Activated T-helper 1 cell treated with anti-CD3 and anti-CD28 coated beads, Interleukin-12 subunit alpha, Interleukin-12 subunit beta, Interleukin-2, Interleukin-4 antibody, amounts not matched to agents 30 ng/mL and 10 ng/mL and 1 ng/mL, durations not matched to agents 14 hours and 24 hours and 36 hours (primary cell): ENCODE measurements at regions of chr19 and their contacts with region 1.

Region 1: GRCh38 chr19:33778089-33778791 is 18.4 kb upstream of the KCTD15 start:
- DNase-seq: peak; percentile 76
- H3K4me3 Mint-ChIP-seq: no peak overlapping the region
- H3K27ac Mint-ChIP-seq: no peak overlapping the region
- H3K4me1 Mint-ChIP-seq: peaks cover 5% of the 10 kb centered on the region
- H3K27me3 Mint-ChIP-seq: peaks cover 2% of the 10 kb centered on the region

Region 2: DNA sequence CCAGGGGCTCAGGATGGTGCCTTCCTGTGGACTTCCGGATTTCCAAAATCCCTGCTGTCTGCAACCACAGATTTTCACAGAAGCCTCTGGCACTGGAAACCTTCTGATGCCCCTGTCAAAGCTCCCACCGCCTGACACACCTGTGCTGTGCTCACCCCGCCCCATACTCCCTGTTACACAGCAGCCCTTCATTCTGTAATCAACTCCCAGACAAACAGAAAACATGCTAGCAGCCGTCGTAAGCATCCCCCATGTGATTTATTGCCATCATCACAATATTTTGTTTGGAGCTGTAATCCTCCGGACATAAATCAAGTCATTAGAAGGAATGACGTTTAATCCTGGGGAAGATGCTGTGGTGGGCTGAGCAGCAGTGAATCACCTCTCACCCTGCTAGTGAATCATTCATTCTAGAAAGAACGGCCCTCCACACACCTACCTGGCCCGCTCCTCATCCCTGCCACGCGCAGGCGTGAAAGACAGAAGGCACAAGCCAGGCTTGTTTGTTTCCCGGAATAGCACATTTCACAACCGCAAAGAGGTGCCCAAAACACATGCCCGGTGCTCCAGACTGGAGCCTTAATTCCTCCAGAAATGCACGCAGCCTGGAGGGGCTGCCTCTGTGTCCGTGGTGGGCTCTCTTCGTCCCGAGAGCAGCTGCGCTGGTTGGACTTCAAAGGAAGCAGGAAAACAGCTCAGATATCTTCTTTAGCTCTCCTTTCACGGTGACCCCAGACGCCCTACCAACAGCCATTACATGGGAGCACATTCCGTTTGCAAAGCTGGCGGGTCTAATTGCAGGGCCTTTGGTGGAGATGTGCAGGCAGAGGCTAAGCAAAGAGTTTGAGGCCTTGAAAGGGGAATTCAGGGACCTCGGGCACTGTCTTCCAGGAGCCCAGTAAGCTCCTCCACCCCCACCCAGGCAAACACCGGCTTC is 22.9 kb before region 1 on chr19:
- intact Hi-C with region 1: no loop called
- DNase-seq: no peak
- H3K4me3 Mint-ChIP-seq: no peak overlapping the region
- H3K27ac Mint-ChIP-seq: no peak overlapping the region
- H3K4me1 Mint-ChIP-seq: no peaks in the 10 kb centered on the region
- H3K27me3 Mint-ChIP-seq: no peaks in the 10 kb centered on the region

Region 3: GRCh38 chr19:33795370-33796163 is 17.3 kb after region 1 on chr19:
- intact Hi-C with region 1: loop called (anchors 1 kb)
- DNase-seq: peak; percentile 27
- H3K4me3 Mint-ChIP-seq: peak overlapping the region; percentile 73
- H3K27ac Mint-ChIP-seq: peak overlapping the region; percentile 52
- H3K4me1 Mint-ChIP-seq: no peaks in the 10 kb centered on the region
- H3K27me3 Mint-ChIP-seq: peaks cover 28% of the 10 kb centered on the region

Region 4: GRCh38 chr19:33998739-33999345 is 220.6 kb after region 1 on chr19:
- intact Hi-C with region 1: loop called (anchors 1 kb)
- DNase-seq: no peak
- H3K4me3 Mint-ChIP-seq: no peak overlapping the region
- H3K27ac Mint-ChIP-seq: no peak overlapping the region
- H3K4me1 Mint-ChIP-seq: no peaks in the 10 kb centered on the region
- H3K27me3 Mint-ChIP-seq: peaks cover 6% of the 10 kb centered on the region

Region 5: GRCh38 chr19:34145741-34146202 is 367.5 kb after region 1 on chr19:
- intact Hi-C with region 1: loop called (anchors 1 kb)
- DNase-seq: peak; percentile 31
- H3K4me3 Mint-ChIP-seq: no peak overlapping the region
- H3K27ac Mint-ChIP-seq: no peak overlapping the region
- H3K4me1 Mint-ChIP-seq: no peaks in the 10 kb centered on the region
- H3K27me3 Mint-ChIP-seq: no peaks in the 10 kb centered on the region

Region 6: GRCh38 chr19:34712395-34713261 is 934.4 kb after region 1 on chr19:
- intact Hi-C with region 1: loop called (anchors 5 kb)
- DNase-seq: peak; percentile 43
- H3K4me3 Mint-ChIP-seq: no peak overlapping the region
- H3K27ac Mint-ChIP-seq: no peak overlapping the region
- H3K4me1 Mint-ChIP-seq: peaks cover 5% of the 10 kb centered on the region
- H3K27me3 Mint-ChIP-seq: peaks cover 4% of the 10 kb centered on the region